PC-9 (cell line): ENCODE measurements at regions of chr10 and their contacts with region 1.

Region 1: GRCh38 chr10:88759366-88760101 is at the start of gene LIPN:
- DNase-seq: no peak
- H3K4me3 ChIP-seq: no peak within 1 kb of the TSS
- H3K27ac ChIP-seq: no peak within 1 kb of the TSS
- H3K4me1 ChIP-seq: no peaks in the 10 kb centered on the region
- H3K27me3 ChIP-seq: no peaks in the 10 kb centered on the region
- CTCF ChIP-seq: no peak
- total RNA-seq, gene LIPN: not detected in 2 replicates

Region 2: GRCh38 chr10:88288320-88289059 is 471.0 kb before region 1 on chr10:
- CTCF ChIA-PET with region 1: no interaction called
- POLR2A ChIA-PET with region 1: no interaction called
- intact Hi-C with region 1: no loop called
- DNase-seq: no peak
- H3K4me3 ChIP-seq: no peak overlapping the region
- H3K27ac ChIP-seq: no peak overlapping the region
- H3K4me1 ChIP-seq: no peaks in the 10 kb centered on the region
- H3K27me3 ChIP-seq: no peaks in the 10 kb centered on the region
- CTCF ChIP-seq: no peak

Region 3: DNA sequence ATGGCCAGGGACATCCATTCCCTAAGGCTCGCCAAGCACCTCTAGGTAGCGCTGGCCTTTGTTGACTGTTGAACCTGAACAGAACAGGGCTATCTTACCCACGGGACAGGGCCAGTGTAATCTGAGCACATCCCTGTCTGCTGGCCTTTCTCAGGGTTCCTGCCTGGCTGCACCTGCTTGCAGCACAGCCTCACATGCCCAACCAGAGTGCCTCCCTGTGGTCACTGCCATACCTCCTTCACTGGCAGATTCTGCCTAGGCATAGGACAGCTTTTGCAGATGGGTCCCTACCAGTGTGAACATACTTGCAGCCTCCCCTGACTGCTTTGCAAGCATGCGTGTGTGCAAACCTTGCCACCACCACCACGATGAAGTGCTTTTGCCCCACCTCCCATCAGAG is 15.5 kb before region 1 on chr10:
- CTCF ChIA-PET with region 1: no interaction called
- POLR2A ChIA-PET with region 1: no interaction called
- intact Hi-C with region 1: no loop called
- DNase-seq: no peak
- H3K4me3 ChIP-seq: no peak overlapping the region
- H3K27ac ChIP-seq: no peak overlapping the region
- H3K4me1 ChIP-seq: no peaks in the 10 kb centered on the region
- H3K27me3 ChIP-seq: no peaks in the 10 kb centered on the region
- CTCF ChIP-seq: no peak

Region 4: GRCh38 chr10:88783724-88784123 is 24.2 kb after region 1 on chr10:
- CTCF ChIA-PET with region 1: no interaction called
- POLR2A ChIA-PET with region 1: no interaction called
- intact Hi-C with region 1: loop called (anchors 2 kb)
- DNase-seq: no peak
- H3K4me3 ChIP-seq: no peak overlapping the region
- H3K27ac ChIP-seq: no peak overlapping the region
- H3K4me1 ChIP-seq: no peaks in the 10 kb centered on the region
- H3K27me3 ChIP-seq: no peaks in the 10 kb centered on the region
- CTCF ChIP-seq: no peak